Calu3 (cell line): ENCODE measurements at regions of chr6 and their contacts with region 1.

Region 1: GRCh38 chr6:99119109-99120031 is 171.6 kb upstream of the FBXL4 start:
- DNase-seq: peak; percentile 59
- H3K4me3 Mint-ChIP-seq: no peak overlapping the region
- H3K27ac Mint-ChIP-seq: no peak overlapping the region
- H3K4me1 Mint-ChIP-seq: peaks cover 8% of the 10 kb centered on the region
- H3K27me3 Mint-ChIP-seq: peaks cover 13% of the 10 kb centered on the region
- CTCF ChIP-seq: peak; percentile 51

Region 2: GRCh38 chr6:97497713-97498331 is 1621.5 kb before region 1 on chr6:
- CTCF ChIA-PET with region 1: no interaction called
- intact Hi-C with region 1: loop called (anchors 5 kb)
- DNase-seq: peak; percentile 65
- H3K4me3 Mint-ChIP-seq: no peak overlapping the region
- H3K27ac Mint-ChIP-seq: no peak overlapping the region
- H3K4me1 Mint-ChIP-seq: no peaks in the 10 kb centered on the region
- H3K27me3 Mint-ChIP-seq: no peaks in the 10 kb centered on the region
- CTCF ChIP-seq: peak; percentile 70

Region 3: DNA sequence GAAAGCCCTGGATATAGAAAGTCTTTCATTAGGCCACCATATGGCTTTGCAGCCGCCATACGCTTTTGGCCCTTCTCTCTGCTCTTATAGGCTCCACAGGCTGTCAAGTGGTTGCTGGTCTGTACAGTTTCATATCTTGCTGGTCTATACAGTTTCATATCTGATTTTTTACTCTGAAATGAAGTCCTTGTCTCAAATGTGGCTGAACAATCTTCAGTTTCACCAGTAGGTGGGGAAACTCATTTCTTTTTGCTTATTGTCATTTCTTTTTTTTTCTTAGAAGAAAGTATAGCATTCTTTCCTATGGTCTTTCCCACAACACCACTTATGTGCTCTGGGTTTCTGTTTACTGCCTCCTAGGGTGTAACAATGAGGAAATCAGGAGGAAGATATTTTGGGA is 1064.9 kb before region 1 on chr6:
- CTCF ChIA-PET with region 1: no interaction called
- intact Hi-C with region 1: loop called (anchors 1 kb)
- DNase-seq: no peak
- H3K4me3 Mint-ChIP-seq: no peak overlapping the region
- H3K27ac Mint-ChIP-seq: no peak overlapping the region
- H3K4me1 Mint-ChIP-seq: no peaks in the 10 kb centered on the region
- H3K27me3 Mint-ChIP-seq: no peaks in the 10 kb centered on the region
- CTCF ChIP-seq: no peak

Region 4: DNA sequence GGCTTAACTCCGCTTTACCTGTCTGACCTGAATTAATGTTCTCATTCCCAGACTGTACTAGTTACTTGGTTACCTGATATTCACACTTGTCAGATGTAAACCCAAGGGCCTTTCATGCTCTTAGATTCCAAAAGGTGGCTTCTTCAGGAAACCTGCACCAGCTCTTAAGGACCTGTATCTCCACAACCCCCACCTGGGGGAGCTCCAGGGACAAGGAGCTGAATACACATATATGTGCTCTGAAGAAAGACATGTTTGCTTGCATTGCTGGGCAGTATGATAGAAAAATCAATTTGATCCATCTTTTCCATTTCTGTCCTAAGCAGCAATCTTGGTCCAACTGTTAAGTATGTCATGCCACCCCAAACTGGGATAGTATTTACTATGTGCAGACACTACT is 349.8 kb before region 1 on chr6:
- CTCF ChIA-PET with region 1: interaction called, 25 read pairs
- intact Hi-C with region 1: loop called (anchors 1 kb)
- DNase-seq: peak; percentile 64
- H3K4me3 Mint-ChIP-seq: no peak overlapping the region
- H3K27ac Mint-ChIP-seq: no peak overlapping the region
- H3K4me1 Mint-ChIP-seq: peaks cover 5% of the 10 kb centered on the region
- H3K27me3 Mint-ChIP-seq: peaks cover 6% of the 10 kb centered on the region
- CTCF ChIP-seq: no peak

Region 5: DNA sequence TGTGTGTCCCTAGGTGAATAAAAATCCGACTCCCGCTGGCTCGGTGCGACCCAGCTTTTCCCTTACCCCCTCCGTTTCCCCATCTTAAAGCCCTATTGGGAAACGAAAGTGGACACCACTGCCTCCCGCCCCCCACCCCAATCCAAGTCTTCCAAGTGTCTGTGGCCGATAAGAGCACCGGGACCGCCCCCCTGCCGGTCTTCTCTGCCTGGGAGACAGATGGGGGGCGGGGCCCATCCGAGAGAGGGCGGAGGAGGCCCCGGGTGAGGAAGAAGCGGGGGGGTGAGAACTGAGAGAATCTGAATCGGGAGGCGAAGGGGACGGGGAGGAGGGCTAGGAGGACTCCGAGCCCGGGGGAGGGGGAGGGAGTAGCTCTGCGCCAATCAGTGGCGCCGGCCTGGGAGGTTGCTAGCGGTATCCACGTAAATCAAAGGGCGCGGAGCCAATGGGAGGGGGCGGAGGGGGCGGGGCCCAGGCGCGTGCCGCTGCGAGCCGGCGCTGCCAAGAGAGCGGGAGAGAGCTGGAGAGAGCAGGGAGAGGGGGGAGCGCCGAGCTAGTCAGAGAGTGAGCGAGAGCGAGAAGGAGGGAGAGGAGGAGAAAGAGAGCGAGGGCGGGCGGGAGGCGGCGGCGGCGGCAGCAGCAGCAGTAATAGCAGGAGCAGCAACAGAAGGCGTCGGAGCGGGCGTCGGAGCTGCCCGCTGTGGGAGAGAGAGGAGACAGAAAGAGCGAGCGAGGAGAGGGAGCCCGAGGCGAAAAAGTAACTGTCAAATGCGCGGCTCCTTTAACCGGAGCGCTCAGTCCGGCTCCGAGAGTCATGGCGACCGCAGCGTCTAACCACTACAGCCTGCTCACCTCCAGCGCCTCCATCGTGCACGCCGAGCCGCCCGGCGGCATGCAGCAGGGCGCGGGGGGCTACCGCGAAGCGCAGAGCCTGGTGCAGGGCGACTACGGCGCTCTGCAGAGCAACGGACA is 285.0 kb before region 1 on chr6 and contains the start of gene POU3F2:
- CTCF ChIA-PET with region 1: interaction called, 6 read pairs
- intact Hi-C with region 1: loop called (anchors 2 kb)
- DNase-seq: peak; percentile 85
- H3K4me3 Mint-ChIP-seq: peak within 1 kb of the TSS; percentile 84
- H3K27ac Mint-ChIP-seq: peak within 1 kb of the TSS; percentile 52
- H3K4me1 Mint-ChIP-seq: peaks cover 20% of the 10 kb centered on the region
- H3K27me3 Mint-ChIP-seq: peaks cover 91% of the 10 kb centered on the region
- CTCF ChIP-seq: no peak
- total RNA-seq, gene POU3F2: 0.12 TPM in 1 of 2 replicates, not detected in the other

Region 6: DNA sequence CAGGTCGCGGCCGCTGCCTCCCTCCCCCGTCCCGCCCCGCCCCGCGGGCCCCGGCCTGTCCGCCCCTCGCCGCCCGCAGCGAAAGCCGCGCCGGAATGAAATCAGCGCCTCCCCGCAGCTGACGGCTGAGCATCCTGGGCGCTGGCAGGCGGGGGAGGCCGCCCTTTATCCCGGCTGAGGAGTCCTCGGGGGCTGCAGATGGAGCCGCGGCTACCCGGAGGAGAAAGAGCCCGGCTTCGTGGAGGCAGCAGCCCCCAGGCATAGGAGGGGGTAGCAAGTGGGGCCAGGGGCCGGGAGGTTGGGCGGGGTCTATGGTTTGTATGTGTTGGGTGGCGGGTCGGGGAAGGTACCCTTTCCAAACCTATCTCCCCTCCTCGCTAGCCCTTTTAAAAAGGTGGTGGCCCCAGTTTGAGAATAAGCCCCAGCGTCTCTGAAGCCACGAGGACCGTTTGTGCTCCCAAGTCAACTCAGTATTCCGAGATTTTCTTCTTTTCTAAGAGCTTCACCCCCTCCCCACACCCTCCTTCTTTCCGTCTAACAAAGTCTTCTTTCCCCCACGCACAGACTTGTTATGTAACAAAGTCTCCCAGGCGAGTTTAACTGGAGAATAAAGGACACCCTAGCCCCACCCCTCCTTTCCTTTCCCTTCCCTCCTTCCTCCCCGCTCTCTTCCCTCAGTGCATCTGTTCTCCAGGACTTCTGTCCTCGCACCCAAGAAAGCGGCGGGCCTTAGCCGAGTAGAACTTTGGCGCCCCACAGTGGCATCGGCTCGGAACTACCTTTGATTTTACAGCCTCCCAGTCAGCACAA is 274.0 kb before region 1 on chr6:
- CTCF ChIA-PET with region 1: interaction called, 3 read pairs
- intact Hi-C with region 1: loop called (anchors 1 kb)
- DNase-seq: peak; percentile 83
- H3K4me3 Mint-ChIP-seq: peak overlapping the region; percentile 68
- H3K27ac Mint-ChIP-seq: no peak overlapping the region
- H3K4me1 Mint-ChIP-seq: peaks cover 8% of the 10 kb centered on the region
- H3K27me3 Mint-ChIP-seq: peaks cover 58% of the 10 kb centered on the region
- CTCF ChIP-seq: peak; percentile 76

Region 7: GRCh38 chr6:98947351-98948292 is 171.7 kb before region 1 on chr6 and contains the start of gene FBXL4:
- CTCF ChIA-PET with region 1: interaction called, 3 read pairs
- intact Hi-C with region 1: loop called (anchors 5 kb)
- DNase-seq: peak; percentile 84
- H3K4me3 Mint-ChIP-seq: peak within 1 kb of the TSS; percentile 98
- H3K27ac Mint-ChIP-seq: peak within 1 kb of the TSS; percentile 87
- H3K4me1 Mint-ChIP-seq: peaks cover 20% of the 10 kb centered on the region
- H3K27me3 Mint-ChIP-seq: no peaks in the 10 kb centered on the region
- CTCF ChIP-seq: no peak
- total RNA-seq, gene FBXL4: 11.5 and 13.1 TPM in 2 replicates